ENCODE measurements at regions of chr17 and their contacts with region 1.

Region 1: GRCh38 chr17:56779898-56780733 is 53.6 kb downstream of the C17orf67 start:
- DNase-seq: peak; percentile 74
- H3K27ac ChIP-seq: peak overlapping the region; percentile 47
- CTCF ChIP-seq: peak; percentile 100

Region 2: DNA sequence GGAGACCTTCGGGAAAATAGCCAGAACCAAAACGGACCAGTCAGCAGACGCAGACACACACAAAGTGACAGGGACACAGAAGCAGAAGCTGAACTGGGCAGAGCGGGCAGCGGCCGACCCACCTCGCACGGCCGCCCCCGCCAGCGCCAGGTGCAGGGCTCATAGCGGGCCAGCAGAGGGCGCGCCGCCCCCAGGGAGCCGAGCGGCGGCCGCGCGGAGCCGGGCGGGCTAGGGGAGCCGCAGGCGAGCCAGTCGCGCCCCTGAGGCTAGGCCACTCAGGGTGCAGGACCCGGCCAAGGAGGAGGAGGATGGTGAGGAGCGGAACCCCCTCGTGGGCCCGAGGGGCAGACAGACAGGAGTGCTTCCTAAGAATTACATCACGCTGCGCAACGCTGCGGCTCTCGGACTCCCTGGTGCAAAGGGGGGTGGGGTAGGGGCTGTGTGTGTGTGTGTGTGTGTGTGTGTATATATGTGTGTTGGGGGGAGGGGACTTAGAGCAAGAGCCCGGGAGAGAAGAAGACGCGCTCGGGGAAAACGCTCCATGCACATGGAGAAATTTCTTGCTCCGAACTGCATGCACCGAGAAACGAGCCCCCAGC is 187.5 kb before region 1 on chr17:
- CTCF ChIA-PET with region 1: interaction called, 19 read pairs
- POLR2A ChIA-PET with region 1: no interaction called
- DNase-seq: peak; percentile 60
- H3K27ac ChIP-seq: peak overlapping the region; percentile 89
- CTCF ChIP-seq: peak; percentile 99

Region 3: GRCh38 chr17:56624315-56624714 is 155.8 kb before region 1 on chr17:
- CTCF ChIA-PET with region 1: no interaction called
- POLR2A ChIA-PET with region 1: no interaction called
- DNase-seq: no peak
- H3K27ac ChIP-seq: no peak overlapping the region
- CTCF ChIP-seq: no peak

Region 4: GRCh38 chr17:56845934-56846333 is 65.8 kb after region 1 on chr17:
- CTCF ChIA-PET with region 1: no interaction called
- POLR2A ChIA-PET with region 1: no interaction called
- DNase-seq: no peak
- H3K27ac ChIP-seq: no peak overlapping the region
- CTCF ChIP-seq: no peak

Region 5: DNA sequence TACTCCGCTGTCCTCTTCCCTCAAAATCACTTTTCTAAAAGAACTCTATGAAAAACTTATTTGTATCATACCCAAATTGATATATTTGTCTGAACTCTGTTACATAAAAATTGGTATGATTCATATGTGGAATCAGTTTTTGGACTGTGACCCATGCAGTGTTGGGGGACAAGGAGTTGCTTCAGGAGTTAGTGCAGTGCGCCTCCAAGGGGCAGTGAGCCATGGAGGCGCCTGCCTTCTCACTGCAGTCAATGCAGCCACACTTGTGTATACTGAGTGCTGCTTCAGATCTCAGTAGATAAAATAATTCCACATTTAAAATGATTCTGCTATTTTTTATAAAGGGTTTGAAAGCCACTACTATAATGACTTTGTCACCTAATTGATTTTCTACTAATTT is 86.4 kb after region 1 on chr17:
- CTCF ChIA-PET with region 1: no interaction called
- POLR2A ChIA-PET with region 1: no interaction called
- DNase-seq: no peak
- H3K27ac ChIP-seq: no peak overlapping the region
- CTCF ChIP-seq: 0 out of 2 replicates have a peak, but pooled peaks have one; percentile 11

Region 6: GRCh38 chr17:56881685-56882295 is 101.7 kb after region 1 on chr17:
- CTCF ChIA-PET with region 1: no interaction called
- POLR2A ChIA-PET with region 1: no interaction called
- DNase-seq: no peak
- H3K27ac ChIP-seq: no peak overlapping the region
- CTCF ChIP-seq: no peak